ENCODE measurements at regions of chr6 and their contacts with region 1.

Region 1: DNA sequence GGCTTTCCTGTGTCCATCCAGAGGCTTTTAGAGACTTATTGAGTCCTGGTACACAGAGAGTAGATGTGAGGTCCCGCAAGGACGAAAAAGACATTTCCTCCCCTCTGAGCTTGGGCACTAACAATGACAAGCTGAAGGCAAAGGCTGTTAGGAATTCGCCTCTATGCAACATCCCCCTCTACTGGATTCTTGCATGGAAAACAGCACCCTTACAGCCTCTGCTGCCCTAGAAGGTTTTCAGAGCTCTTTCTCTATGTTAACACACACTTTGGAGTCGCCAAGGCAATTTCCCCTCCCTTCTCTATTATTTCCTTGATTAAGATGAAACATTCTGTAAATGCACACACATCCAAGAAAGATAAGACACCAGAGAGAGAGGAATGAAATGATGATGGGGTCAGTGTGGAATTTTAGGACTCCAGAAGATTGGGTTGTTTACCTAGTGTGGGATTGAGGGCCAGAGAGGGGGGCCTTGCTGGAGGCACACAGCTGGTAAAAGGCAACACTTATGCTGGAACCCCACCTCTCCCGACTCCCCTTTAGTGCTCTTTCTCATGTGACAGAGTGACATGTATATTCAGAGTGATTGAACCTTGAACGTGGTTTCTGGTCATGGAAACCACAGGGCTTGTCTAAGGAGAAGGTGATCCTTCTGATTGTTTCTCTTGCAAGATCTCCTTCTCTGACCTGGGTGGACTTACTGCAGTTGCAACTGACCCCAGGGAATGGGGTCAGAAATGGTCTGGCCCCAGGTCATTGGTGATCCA is 300.7 kb downstream of the CLIC5 start:
- DNase-seq: peak; percentile 62
- H3K4me3 Mint-ChIP-seq: no peak overlapping the region
- H3K27ac Mint-ChIP-seq: peak overlapping the region; percentile 93
- H3K4me1 Mint-ChIP-seq: peaks cover 73% of the 10 kb centered on the region
- H3K27me3 Mint-ChIP-seq: no peaks in the 10 kb centered on the region

Region 2: DNA sequence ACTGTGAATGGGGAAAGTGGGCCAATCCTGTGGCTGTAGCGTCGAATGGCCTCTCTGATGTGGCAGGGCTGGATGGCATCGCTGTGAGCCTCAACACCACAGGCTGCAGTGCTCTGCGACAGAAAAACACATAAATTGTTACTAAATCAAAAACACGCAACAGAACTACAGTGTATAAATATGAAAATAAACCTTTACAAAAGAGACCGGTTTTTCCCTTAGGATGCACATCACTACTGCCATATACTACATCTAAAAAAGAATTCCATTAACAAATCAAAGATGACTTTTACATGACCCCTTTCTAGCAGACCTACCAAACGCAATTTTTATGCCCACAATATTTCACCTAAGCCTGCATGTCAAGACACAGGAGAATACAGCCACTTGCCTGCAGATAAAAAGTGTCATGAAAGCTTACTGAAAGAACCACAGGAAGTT is 782.3 kb before region 1 on chr6:
- CTCF ChIA-PET with region 1: no interaction called
- POLR2A ChIA-PET with region 1: no interaction called
- intact Hi-C with region 1: loop called (anchors 10 kb)
- DNase-seq: peak; percentile 43
- H3K4me3 Mint-ChIP-seq: peak overlapping the region; percentile 80
- H3K27ac Mint-ChIP-seq: peak overlapping the region; percentile 88
- H3K4me1 Mint-ChIP-seq: peaks cover 41% of the 10 kb centered on the region
- H3K27me3 Mint-ChIP-seq: no peaks in the 10 kb centered on the region

Region 3: GRCh38 chr6:45377554-45378333 is 337.2 kb before region 1 on chr6 and contains the start of gene SUPT3H:
- CTCF ChIA-PET with region 1: interaction called, 14 read pairs
- POLR2A ChIA-PET with region 1: interaction called, 3 read pairs
- intact Hi-C with region 1: loop called (anchors 1 kb)
- DNase-seq: peak; percentile 96
- H3K4me3 Mint-ChIP-seq: peak within 1 kb of the TSS; percentile 94
- H3K27ac Mint-ChIP-seq: peak within 1 kb of the TSS; percentile 97
- H3K4me1 Mint-ChIP-seq: peaks cover 27% of the 10 kb centered on the region
- H3K27me3 Mint-ChIP-seq: no peaks in the 10 kb centered on the region
- total RNA-seq, gene SUPT3H: 17.4 to 18.2 TPM

Region 4: GRCh38 chr6:45555981-45556771 is 158.7 kb before region 1 on chr6:
- CTCF ChIA-PET with region 1: interaction called, 3 read pairs
- POLR2A ChIA-PET with region 1: no interaction called
- intact Hi-C with region 1: loop called (anchors 2 kb)
- DNase-seq: no peak
- H3K4me3 Mint-ChIP-seq: no peak overlapping the region
- H3K27ac Mint-ChIP-seq: no peak overlapping the region
- H3K4me1 Mint-ChIP-seq: peaks cover 49% of the 10 kb centered on the region
- H3K27me3 Mint-ChIP-seq: no peaks in the 10 kb centered on the region

Region 5: GRCh38 chr6:45626087-45626891 is 88.6 kb before region 1 on chr6:
- CTCF ChIA-PET with region 1: interaction called, 3 read pairs
- POLR2A ChIA-PET with region 1: interaction called, 4 read pairs
- intact Hi-C with region 1: loop called (anchors 1 kb)
- DNase-seq: peak; percentile 65
- H3K4me3 Mint-ChIP-seq: no peak overlapping the region
- H3K27ac Mint-ChIP-seq: peak overlapping the region; percentile 80
- H3K4me1 Mint-ChIP-seq: peaks cover 48% of the 10 kb centered on the region
- H3K27me3 Mint-ChIP-seq: no peaks in the 10 kb centered on the region

Region 6: GRCh38 chr6:45801471-45802289 is 86.8 kb after region 1 on chr6:
- CTCF ChIA-PET with region 1: interaction called, 4 read pairs
- POLR2A ChIA-PET with region 1: interaction called, 13 read pairs
- intact Hi-C with region 1: loop called (anchors 1 kb)
- DNase-seq: peak; percentile 84
- H3K4me3 Mint-ChIP-seq: no peak overlapping the region
- H3K27ac Mint-ChIP-seq: no peak overlapping the region
- H3K4me1 Mint-ChIP-seq: no peaks in the 10 kb centered on the region
- H3K27me3 Mint-ChIP-seq: peaks cover 8% of the 10 kb centered on the region